A673 (cell line): ENCODE measurements at regions of chr7 and their contacts with region 1.

Region 1: DNA sequence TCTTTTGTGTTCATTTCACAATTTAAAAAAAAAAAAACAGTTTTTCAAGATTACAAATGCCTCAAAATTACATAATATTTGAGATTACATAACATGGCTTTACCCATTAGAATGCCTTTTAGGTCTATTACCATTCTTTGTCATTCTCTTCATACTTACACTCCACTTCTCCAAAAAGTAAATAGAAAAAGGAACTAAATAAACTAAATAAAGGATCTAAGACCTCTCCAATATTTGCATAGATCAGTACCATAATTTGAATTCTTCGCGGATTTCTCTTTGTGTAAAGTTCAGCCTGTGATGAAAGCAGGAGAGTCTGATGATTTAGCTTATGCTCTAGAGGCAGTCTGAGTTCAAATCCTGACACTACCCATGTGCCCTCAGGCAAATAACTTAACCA is 56.4 kb upstream of the C1GALT1 start:
- DNase-seq: no peak
- H3K4me3 ChIP-seq: no peak overlapping the region
- H3K27ac ChIP-seq: no peak overlapping the region
- H3K4me1 ChIP-seq: no peaks in the 10 kb centered on the region
- H3K27me3 ChIP-seq: no peaks in the 10 kb centered on the region
- CTCF ChIP-seq: no peak

Region 2: GRCh38 chr7:7146837-7147236 is 20.9 kb after region 1 on chr7:
- CTCF ChIA-PET with region 1: interaction called, 12 read pairs
- POLR2A ChIA-PET with region 1: no interaction called
- intact Hi-C with region 1: no loop called
- DNase-seq: no peak
- H3K4me3 ChIP-seq: no peak overlapping the region
- H3K27ac ChIP-seq: no peak overlapping the region
- H3K4me1 ChIP-seq: no peaks in the 10 kb centered on the region
- H3K27me3 ChIP-seq: no peaks in the 10 kb centered on the region
- CTCF ChIP-seq: no peak

Region 3: GRCh38 chr7:8353991-8354390 is 1228.0 kb after region 1 on chr7:
- CTCF ChIA-PET with region 1: no interaction called
- POLR2A ChIA-PET with region 1: interaction called, 14 read pairs
- intact Hi-C with region 1: no loop called
- DNase-seq: no peak
- H3K4me3 ChIP-seq: no peak overlapping the region
- H3K27ac ChIP-seq: no peak overlapping the region
- H3K4me1 ChIP-seq: no peaks in the 10 kb centered on the region
- H3K27me3 ChIP-seq: peaks cover 9% of the 10 kb centered on the region
- CTCF ChIP-seq: no peak